H1 (cell line): ENCODE measurements at regions of chr5 and their contacts with region 1.

Region 1: GRCh38 chr5:1380011-1380817 is 35.3 kb upstream of the CLPTM1L start:
- DNase-seq: peak in 1 of 2 experiments; percentile 86
- H3K4me3 ChIP-seq: peak overlapping the region in 1 of 4 experiments; percentile 14; a peak in 3 of 8 replicates
- H3K27ac ChIP-seq: no peak overlapping the region
- H3K4me1 ChIP-seq: peaks cover 0 to 6% (median 4%) of the 10 kb centered on the region in 4 experiments; a peak in 6 of 7 replicates
- H3K27me3 ChIP-seq: peaks cover 1 to 30% (median 26%) of the 10 kb centered on the region in 4 experiments
- CTCF ChIP-seq: peak in 2 of 3 experiments; percentile 74 to 98; a peak in 3 of 4 replicates
- EP300 ChIP-seq: no peak
- POLR2A ChIP-seq: no peak
- RAD21 ChIP-seq: peak; percentile 66 to 78

Region 2: GRCh38 chr5:1351156-1351555 is 29.1 kb before region 1 on chr5:
- CTCF ChIA-PET with region 1: interaction called, 27 read pairs
- POLR2A ChIA-PET with region 1: no interaction called
- DNase-seq: no peak
- H3K4me3 ChIP-seq: no peak overlapping the region
- H3K27ac ChIP-seq: no peak overlapping the region
- H3K4me1 ChIP-seq: peaks cover 0 to 4% (median 0%) of the 10 kb centered on the region in 4 experiments; a peak in 1 of 7 replicates
- H3K27me3 ChIP-seq: no peaks in the 10 kb centered on the region
- CTCF ChIP-seq: no peak
- EP300 ChIP-seq: no peak
- POLR2A ChIP-seq: no peak
- RAD21 ChIP-seq: no peak

Region 3: GRCh38 chr5:1409381-1410110 is 29.3 kb after region 1 on chr5:
- CTCF ChIA-PET with region 1: interaction called, 31 read pairs
- POLR2A ChIA-PET with region 1: interaction called, 6 read pairs
- DNase-seq: peak in 1 of 2 experiments; percentile 78
- H3K4me3 ChIP-seq: no peak overlapping the region
- H3K27ac ChIP-seq: no peak overlapping the region
- H3K4me1 ChIP-seq: peaks cover 0 to 14% (median 8%) of the 10 kb centered on the region in 4 experiments; a peak in 5 of 7 replicates
- H3K27me3 ChIP-seq: no peaks in the 10 kb centered on the region
- CTCF ChIP-seq: no peak
- EP300 ChIP-seq: no peak
- POLR2A ChIP-seq: no peak
- RAD21 ChIP-seq: 0 out of 4 replicates have a peak, but pooled peaks of 1 of the 2 experiments have one; percentile 8

Region 4: GRCh38 chr5:1467768-1468534 is 87.7 kb after region 1 on chr5:
- CTCF ChIA-PET with region 1: interaction called, 16 read pairs
- POLR2A ChIA-PET with region 1: interaction called, 3 read pairs
- DNase-seq: peak in 1 of 2 experiments; percentile 78
- H3K4me3 ChIP-seq: no peak overlapping the region
- H3K27ac ChIP-seq: no peak overlapping the region
- H3K4me1 ChIP-seq: no peaks in the 10 kb centered on the region
- H3K27me3 ChIP-seq: no peaks in the 10 kb centered on the region; a peak in 1 of 7 replicates
- CTCF ChIP-seq: peak in 2 of 3 experiments; percentile 85 to 91; a peak in 3 of 4 replicates
- EP300 ChIP-seq: no peak
- POLR2A ChIP-seq: no peak
- RAD21 ChIP-seq: peak; percentile 80 to 85

Region 5: DNA sequence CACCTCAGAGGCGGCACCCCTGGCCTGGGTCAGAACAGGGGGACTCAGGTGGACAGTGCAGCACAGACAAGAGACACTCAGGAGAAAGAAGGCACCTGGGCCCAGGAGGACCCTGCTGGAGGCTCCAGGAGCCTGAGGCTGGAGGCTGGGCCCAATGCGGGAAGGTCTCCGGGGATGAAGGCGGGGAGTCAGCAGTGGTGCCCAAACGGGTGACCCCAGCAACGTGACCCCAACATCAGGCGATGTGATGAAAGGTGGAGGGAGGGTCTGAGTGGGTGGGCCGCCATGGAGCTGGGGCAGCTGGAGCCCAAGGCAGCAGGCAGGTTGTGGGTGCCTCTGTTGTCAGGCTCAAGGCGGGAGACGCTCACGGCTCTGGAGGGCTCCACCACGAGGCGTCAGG is 106.1 kb after region 1 on chr5:
- CTCF ChIA-PET with region 1: no interaction called
- POLR2A ChIA-PET with region 1: no interaction called
- DNase-seq: no peak
- H3K4me3 ChIP-seq: no peak overlapping the region
- H3K27ac ChIP-seq: no peak overlapping the region
- H3K4me1 ChIP-seq: no peaks in the 10 kb centered on the region
- H3K27me3 ChIP-seq: no peaks in the 10 kb centered on the region
- CTCF ChIP-seq: no peak
- EP300 ChIP-seq: no peak
- POLR2A ChIP-seq: no peak
- RAD21 ChIP-seq: no peak

Region 6: GRCh38 chr5:1641560-1642166 is 261.4 kb after region 1 on chr5:
- CTCF ChIA-PET with region 1: interaction called, 11 read pairs
- POLR2A ChIA-PET with region 1: no interaction called
- DNase-seq: peak in 1 of 2 experiments; percentile 68
- H3K4me3 ChIP-seq: peak overlapping the region in 1 of 4 experiments; percentile 32; a peak in 1 of 8 replicates
- H3K27ac ChIP-seq: no peak overlapping the region
- H3K4me1 ChIP-seq: peaks cover 2 to 28% (median 8%) of the 10 kb centered on the region in 4 experiments
- H3K27me3 ChIP-seq: peaks cover 0 to 17% (median 11%) of the 10 kb centered on the region in 4 experiments; a peak in 6 of 7 replicates
- CTCF ChIP-seq: peak; percentile 73 to 98 (median 90)
- EP300 ChIP-seq: no peak
- POLR2A ChIP-seq: no peak
- RAD21 ChIP-seq: peak; percentile 76 to 79